ENCODE measurements at regions of chr11 and their contacts with region 1.

Region 1: GRCh38 chr11:34351687-34352469 is 5.9 kb downstream of the ABTB2 start:
- DNase-seq: no peak
- H3K4me3 ChIP-seq: no peak overlapping the region
- CTCF ChIP-seq: no peak

Region 2: DNA sequence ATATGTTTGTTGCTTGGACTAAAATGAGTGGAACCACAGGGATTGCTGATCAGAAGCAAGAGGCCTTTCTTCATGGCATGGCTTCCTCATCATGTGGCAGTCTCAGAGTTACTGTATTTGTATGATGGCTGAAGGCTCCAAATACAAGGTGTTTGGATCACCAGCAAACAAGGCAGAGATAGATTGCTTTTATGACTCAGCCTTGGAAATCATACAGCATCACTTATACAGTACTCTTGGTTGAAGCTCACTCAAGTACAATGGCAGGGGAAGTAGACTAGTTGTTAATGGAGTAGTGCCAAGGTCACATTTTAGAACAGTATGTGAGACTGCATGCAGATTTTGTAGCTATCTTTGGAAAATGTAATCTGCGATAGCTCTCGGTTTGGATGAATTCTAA is 283.8 kb before region 1 on chr11:
- in situ Hi-C with region 1: no loop called
- DNase-seq: peak; percentile 63
- H3K4me3 ChIP-seq: no peak overlapping the region
- CTCF ChIP-seq: no peak

Region 3: GRCh38 chr11:34126959-34127848 is 224.7 kb before region 1 on chr11:
- in situ Hi-C with region 1: no loop called
- DNase-seq: no peak
- H3K4me3 ChIP-seq: no peak overlapping the region
- CTCF ChIP-seq: no peak

Region 4: DNA sequence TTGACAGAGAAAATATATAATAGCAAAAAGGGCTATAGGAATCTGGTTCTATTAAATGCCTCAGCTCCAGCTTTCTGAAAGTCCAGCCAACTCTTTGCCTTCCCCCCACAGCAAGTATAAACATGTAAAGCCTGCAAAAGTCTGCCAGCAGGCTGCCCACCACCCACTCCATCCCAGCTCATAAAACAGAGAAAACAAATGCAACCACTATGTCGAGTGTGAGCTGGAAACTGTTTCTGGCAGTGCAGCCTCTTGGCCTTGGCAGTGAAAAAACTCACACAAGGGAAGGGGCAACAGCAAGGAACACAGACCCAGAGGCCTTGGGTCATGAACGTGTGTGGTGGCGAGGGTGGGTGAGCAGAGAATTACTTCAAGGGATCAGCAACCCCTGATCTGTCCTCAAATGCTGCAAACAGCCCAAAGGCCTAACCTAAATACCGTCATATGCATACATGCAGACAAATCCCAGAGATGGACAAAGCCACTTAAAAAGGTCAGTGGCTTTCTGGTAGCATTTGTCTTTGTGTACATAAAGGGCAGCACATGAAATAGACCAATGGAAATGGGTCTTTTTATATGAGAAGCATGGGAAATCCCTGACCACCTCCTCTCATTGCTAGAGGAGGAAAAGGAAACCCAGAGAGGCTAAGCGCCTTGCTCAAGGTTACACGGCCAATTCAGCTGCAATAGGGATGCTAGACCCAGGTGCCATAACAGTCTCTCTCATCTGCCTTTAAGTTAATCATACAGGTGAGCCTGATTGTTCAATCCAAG is 171.7 kb before region 1 on chr11:
- in situ Hi-C with region 1: loop called (anchors 5 kb)
- DNase-seq: no peak
- H3K4me3 ChIP-seq: no peak overlapping the region
- CTCF ChIP-seq: no peak

Region 5: DNA sequence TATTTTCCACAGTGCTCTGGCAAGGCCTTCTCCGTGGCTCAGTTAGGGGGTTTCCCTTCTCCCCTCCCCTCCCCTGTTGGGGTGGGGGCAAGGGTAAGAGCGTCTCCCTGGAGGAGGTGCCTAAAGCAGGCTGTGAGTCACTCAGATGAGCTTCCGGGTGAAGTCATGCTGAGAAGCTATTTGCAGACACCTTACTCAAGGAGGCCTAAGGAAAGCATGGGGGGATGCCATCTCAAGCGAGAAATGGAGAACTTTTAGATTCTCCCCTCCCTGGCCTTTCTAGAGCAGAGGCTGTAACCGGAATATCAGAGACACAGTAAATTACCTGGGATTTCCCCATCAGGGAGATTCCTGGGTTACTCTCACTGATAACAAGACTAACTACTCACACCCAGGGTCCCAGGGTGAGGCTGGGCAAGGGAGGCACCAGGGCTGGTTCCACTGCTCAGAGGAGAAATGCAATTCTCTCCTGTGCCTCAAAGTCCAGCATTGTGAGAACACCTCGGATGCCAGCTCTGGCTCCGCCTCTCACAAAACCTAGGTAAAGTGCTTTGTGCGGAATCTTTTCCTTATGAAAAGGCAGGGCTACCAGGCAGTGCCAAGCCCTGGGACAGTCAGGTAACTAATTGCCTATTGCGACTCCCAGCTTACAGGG is 117.7 kb before region 1 on chr11:
- in situ Hi-C with region 1: no loop called
- DNase-seq: no peak
- H3K4me3 ChIP-seq: no peak overlapping the region
- CTCF ChIP-seq: no peak

Region 6: DNA sequence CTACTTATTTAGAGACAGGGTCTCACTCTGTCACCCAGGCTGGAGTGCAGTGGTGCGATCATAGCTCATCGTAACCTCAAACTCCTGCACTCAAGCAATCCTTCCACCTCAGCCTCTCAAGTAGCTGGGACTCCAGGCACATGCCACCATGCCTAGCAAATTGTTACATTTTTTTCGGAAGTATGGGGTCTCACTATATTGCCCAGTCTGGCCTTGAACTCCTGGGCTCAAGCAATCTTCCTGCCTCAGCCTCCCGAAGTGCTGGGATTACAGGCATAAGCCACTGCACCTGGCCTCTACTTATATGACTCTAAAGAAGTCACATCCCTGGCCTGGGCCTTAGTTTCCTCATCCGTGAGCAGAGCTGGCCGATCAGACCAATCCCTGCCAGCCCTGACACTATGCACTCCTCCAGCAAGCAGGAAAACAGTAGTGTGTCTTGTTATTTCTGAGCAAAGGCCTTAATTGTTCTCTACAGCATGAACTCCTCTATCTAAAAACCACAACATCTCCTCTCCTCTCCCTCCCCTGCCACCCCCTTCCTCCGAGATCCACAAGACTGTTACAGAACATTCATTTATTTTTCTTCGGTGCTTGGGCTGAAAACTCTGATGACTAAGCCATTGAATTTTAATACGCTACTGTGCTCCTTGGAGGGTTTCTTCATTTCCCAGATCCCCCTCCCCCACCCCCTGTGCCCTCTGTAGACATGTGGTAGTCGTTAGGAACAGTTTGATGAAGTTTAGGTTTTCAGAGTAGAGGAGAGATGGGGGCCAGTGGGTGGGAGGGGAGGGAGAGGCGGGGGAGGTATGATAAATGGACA is 85.6 kb before region 1 on chr11:
- in situ Hi-C with region 1: loop called (anchors 5 kb)
- DNase-seq: peak; percentile 94
- H3K4me3 ChIP-seq: no peak overlapping the region
- CTCF ChIP-seq: no peak

Region 7: DNA sequence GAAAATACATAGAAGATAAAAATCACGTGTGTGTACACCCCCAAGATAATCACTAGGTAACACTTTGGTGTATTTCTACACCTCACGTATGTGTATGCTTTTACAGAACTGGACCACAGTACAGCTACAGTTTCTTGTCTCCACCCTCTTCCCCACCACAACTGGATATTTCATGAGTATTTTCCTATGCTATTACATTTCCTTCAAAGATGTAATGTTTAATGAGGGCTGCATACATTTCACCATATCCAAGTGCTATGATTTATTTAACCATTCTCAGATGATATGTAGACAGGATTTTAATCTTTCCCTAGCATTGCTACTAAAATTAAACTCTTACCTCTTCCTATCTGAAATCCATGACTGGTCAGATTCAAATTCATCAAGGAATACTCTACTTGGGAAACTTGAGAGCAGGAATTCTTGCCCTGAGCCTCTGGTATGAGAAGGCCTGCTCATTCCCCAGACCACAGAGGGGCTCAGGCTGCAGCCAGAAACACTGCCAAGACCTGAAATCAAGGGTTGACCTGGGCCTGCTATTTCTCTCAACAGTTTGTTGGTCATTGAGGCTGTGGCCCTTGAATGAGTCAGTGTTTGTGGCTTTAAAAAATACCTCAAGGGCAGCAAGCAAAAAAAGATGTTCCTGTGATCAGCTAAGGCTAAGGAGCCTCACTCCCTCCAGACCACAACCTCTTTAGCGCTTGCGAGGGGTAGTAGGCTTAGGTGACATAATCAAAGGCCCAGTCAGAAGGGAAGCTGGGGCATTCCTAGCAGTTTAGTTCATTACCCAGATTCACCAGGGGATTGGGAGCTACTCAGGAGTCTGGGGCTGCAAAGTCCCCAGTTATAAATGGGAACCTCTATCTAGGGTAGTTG is 49.6 kb before region 1 on chr11:
- in situ Hi-C with region 1: loop called (anchors 5 kb)
- DNase-seq: peak; percentile 98
- H3K4me3 ChIP-seq: no peak overlapping the region
- CTCF ChIP-seq: no peak

Region 8: GRCh38 chr11:34405079-34405858 is 53.4 kb after region 1 on chr11:
- in situ Hi-C with region 1: no loop called
- DNase-seq: no peak
- H3K4me3 ChIP-seq: no peak overlapping the region
- CTCF ChIP-seq: no peak